Mammary epithelial cell (primary cell): ENCODE measurements at regions of chr17 and their contacts with region 1.

Region 1: DNA sequence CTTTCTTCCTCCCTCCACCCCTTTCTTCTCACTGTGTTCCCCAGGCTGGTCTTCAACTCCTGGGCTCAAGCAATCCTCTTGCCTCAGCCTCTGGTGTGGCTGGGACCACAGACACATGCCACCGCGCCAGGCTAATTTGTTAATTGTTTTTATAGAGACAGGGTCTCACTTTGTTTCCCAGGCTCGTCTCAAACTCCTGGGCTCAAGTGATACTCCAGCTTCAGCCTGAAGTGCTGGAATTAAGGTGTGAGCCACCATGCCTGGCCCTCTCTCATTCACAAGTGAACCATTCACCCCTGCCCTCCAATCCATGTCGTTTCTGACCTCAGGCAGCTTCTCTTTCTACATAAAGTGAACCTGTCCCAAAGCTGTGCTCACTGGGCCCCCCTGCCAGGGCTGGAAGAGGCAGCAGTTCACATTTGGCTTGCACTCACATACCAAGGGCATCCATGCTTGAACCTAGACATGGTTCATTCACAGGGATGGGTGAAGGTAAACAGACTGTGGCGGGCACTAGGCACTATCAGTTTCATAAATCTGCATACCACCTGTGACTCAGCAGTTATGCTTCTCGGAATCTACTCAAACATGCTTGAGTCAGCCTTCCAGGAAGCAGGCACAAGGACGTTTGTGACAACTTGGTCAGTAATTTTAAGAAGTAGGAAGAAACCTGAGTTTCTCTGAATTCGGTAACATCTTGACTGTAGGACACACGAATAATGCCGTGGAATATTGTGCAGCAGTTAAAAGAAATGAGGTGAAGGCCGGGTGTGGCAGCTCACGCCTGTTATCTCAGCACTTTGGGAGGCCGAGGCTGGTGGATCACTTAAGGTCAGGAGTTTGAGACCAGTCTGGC is 6.0 kb upstream of the RNF213 start:
- DNase-seq: peak; percentile 87
- H3K4me3 ChIP-seq: no peak overlapping the region
- H3K27ac ChIP-seq: peak overlapping the region; percentile 66
- H3K4me1 ChIP-seq: peaks cover 23% of the 10 kb centered on the region
- H3K27me3 ChIP-seq: no peaks in the 10 kb centered on the region
- CTCF ChIP-seq: no peak

Region 2: GRCh38 chr17:80008383-80008840 is 246.2 kb before region 1 on chr17:
- CTCF ChIA-PET with region 1: no interaction called
- dilution Hi-C with region 1: no loop called
- in situ Hi-C with region 1: no loop called
- intact Hi-C with region 1: loop called (anchors 5 kb)
- DNase-seq: peak; percentile 48
- H3K4me3 ChIP-seq: no peak overlapping the region
- H3K27ac ChIP-seq: no peak overlapping the region
- H3K4me1 ChIP-seq: no peaks in the 10 kb centered on the region
- H3K27me3 ChIP-seq: no peaks in the 10 kb centered on the region
- CTCF ChIP-seq: peak; percentile 94 to 95

Region 3: DNA sequence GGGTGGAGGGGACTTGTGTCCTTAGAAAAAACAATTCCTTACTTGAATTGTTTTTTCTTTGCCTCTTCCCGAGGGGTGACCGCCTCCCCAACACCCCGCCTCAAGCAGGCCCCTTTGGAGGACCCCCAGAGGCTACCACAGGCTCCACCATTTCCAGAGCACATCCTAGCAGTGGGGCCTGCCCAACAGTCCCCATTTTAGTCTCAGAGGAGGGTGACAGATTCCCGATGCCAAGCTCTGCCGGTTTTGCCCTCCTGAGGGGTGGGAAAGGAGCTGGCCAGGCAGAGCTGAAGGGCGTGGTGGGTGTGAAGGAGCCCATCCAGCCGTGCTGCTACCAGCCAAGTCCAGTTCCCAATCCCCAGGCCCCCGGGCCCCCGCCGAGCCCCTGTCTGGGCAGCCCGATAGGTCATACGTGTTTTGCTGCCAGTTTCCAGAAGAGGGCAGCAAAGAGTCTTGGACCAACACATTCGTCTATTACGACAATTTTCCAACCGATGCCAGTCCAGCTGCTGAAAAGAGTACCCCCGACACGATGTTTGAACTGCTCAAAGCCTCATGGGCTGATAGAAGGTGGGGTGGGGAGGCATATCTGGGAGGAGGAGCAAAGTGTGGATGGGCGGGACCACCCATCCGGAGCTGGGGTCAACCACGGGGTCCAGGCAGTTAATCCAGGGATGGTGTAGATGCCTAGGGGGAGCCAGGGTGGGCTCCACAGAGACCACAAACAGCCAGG is 172.1 kb before region 1 on chr17:
- CTCF ChIA-PET with region 1: no interaction called
- dilution Hi-C with region 1: no loop called
- in situ Hi-C with region 1: no loop called
- intact Hi-C with region 1: loop called (anchors 1 kb)
- DNase-seq: peak; percentile 35
- H3K4me3 ChIP-seq: peak overlapping the region in 1 of 3 experiments; percentile 9
- H3K27ac ChIP-seq: no peak overlapping the region
- H3K4me1 ChIP-seq: no peaks in the 10 kb centered on the region
- H3K27me3 ChIP-seq: no peaks in the 10 kb centered on the region
- CTCF ChIP-seq: peak; percentile 72 to 73

Region 4: DNA sequence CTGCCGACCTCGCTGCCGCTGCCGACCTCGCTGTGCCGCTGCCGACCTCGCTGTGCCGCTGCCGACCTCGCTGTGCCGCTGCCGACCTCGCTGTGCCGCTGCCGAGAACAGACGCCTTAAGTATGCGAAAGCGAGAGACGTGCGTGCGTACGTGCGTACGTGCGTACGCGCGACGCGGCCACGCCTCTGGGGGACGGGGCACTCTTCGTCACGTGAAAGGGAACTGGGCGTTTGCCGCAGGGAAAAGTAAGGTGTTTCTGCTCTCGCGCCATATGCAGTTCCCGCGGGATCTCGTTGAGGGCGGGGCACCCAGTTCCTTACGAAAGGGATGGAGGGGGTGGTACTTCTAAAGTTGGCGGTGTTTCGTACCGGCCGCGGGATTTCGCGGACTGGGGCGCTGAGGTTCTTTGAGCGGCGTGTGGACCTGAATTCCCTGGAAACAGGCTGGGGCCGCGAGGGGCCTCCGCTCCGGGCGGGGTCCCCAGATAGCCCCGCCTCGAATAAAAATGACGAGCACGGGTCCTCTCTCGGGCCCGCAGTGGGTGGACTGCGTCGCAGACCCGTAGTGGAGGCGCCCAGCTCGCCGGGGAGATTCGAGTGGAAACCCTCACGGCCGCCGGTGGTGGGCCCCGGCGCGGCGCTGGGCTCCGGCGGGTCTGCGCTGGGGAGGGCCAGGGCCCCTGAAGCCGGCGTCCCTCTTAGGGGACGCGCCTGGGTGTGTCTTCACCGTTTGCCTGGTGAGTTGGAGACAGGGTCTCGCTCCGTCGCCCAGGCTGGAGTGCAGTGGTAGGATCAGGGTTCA is 107.4 kb before region 1 on chr17 and contains the start of gene EIF4A3:
- CTCF ChIA-PET with region 1: no interaction called
- dilution Hi-C with region 1: no loop called
- in situ Hi-C with region 1: loop called in 1 of 2 experiments (anchors 10 kb)
- intact Hi-C with region 1: loop called (anchors 1 kb)
- DNase-seq: peak; percentile 98
- H3K4me3 ChIP-seq: peak within 1 kb of the TSS; percentile 78 to 96 (median 82)
- H3K27ac ChIP-seq: peak within 1 kb of the TSS; percentile 81
- H3K4me1 ChIP-seq: peaks cover 14% of the 10 kb centered on the region
- H3K27me3 ChIP-seq: no peaks in the 10 kb centered on the region
- CTCF ChIP-seq: peak in 1 of 2 donors; percentile 6
- total RNA-seq, gene EIF4A3: 79.7 to 86.4 TPM

Region 5: DNA sequence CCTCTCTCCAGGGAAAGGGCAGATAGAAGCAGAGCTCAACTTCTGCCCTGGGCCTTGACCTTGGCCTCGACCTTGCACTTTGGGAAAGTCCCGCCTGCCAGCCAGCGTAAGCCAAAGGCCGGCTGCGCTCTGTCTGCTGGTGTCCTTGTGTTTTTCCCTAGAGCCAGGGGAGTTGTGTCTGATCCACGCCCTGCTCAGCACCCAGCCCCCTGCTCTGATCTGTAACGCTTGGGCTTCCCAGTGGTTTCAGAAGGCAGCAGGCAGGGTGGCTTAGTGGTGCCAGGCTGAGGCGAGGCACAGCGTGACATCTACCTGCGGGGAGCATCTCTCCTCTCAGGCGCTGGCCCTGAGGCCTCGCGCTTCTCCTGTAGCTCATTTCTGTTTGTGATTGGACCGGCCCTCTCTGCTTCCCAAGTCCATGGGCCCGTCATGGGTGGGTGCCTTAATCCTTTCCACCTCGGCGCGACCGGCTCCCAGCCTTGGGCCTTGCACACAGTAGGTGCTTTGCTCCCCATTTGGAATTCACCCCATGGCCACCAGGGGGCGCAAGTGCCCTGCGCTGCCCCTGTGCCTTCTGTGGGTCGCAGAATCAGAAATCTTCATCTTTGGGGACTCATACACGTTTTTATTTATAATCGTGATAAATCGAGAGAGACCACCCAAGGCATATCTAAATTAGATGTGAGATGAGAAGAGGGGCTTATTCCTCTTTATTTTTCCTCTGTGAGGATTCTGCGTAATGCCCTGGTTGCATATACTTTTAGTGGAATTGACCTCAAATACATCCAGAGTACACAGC is 58.7 kb before region 1 on chr17:
- CTCF ChIA-PET with region 1: no interaction called
- dilution Hi-C with region 1: no loop called
- in situ Hi-C with region 1: no loop called
- intact Hi-C with region 1: loop called (anchors 1 kb)
- DNase-seq: no peak
- H3K4me3 ChIP-seq: no peak overlapping the region
- H3K27ac ChIP-seq: no peak overlapping the region
- H3K4me1 ChIP-seq: peaks cover 10% of the 10 kb centered on the region
- H3K27me3 ChIP-seq: no peaks in the 10 kb centered on the region
- CTCF ChIP-seq: peak; percentile 70 to 76

Region 6: DNA sequence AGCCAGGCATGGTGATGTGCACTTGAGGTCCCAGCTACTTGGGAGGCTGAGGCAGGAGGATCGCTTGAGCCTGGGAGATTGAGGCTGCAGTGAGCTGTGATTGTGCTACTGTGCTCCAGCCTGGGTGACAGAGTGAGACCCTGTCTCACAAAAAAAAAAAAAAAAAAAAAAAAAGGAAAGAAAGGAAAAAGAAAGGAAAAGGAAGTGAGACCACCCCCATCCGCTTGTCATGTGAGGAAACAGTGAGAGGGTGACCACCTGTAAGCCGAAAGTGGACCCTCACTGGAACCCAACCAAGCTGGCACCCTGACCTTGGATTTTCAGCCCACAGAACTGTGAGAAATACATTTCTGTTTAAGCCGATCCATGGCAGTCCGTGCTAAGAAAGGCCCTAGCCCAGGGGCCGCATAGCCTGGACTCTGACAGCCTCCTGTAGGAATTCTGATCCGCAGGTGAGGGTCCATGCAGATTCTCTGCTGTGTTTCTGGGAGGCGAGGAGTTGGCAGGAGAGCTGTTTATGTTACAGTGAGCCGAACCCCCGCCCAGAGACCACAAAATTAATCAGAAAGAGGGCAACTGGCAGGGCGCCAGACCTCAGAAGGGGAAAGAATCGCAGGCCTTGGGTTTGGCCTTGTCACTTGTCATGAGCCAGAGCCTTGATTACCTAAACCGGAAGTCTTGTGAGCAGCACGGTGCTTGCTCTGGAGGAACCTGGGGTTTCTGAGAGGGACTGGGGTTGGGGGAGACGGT is 35.4 kb before region 1 on chr17:
- CTCF ChIA-PET with region 1: no interaction called
- dilution Hi-C with region 1: loop called (anchors 5 kb)
- in situ Hi-C with region 1: no loop called
- intact Hi-C with region 1: no loop called
- DNase-seq: peak; percentile 82
- H3K4me3 ChIP-seq: peak overlapping the region; percentile 27 to 70 (median 59)
- H3K27ac ChIP-seq: no peak overlapping the region
- H3K4me1 ChIP-seq: peaks cover 12% of the 10 kb centered on the region
- H3K27me3 ChIP-seq: no peaks in the 10 kb centered on the region
- CTCF ChIP-seq: no peak

Region 7: GRCh38 chr17:80279895-80280294 is 25.3 kb after region 1 on chr17:
- CTCF ChIA-PET with region 1: no interaction called
- dilution Hi-C with region 1: no loop called
- in situ Hi-C with region 1: no loop called
- intact Hi-C with region 1: no loop called
- DNase-seq: peak; percentile 80
- H3K4me3 ChIP-seq: no peak overlapping the region
- H3K27ac ChIP-seq: no peak overlapping the region
- H3K4me1 ChIP-seq: peaks cover 35% of the 10 kb centered on the region
- H3K27me3 ChIP-seq: no peaks in the 10 kb centered on the region
- CTCF ChIP-seq: no peak